CD4-positive, alpha-beta memory T cell (primary cell): ENCODE measurements at regions of chr15 and their contacts with region 1.

Region 1: DNA sequence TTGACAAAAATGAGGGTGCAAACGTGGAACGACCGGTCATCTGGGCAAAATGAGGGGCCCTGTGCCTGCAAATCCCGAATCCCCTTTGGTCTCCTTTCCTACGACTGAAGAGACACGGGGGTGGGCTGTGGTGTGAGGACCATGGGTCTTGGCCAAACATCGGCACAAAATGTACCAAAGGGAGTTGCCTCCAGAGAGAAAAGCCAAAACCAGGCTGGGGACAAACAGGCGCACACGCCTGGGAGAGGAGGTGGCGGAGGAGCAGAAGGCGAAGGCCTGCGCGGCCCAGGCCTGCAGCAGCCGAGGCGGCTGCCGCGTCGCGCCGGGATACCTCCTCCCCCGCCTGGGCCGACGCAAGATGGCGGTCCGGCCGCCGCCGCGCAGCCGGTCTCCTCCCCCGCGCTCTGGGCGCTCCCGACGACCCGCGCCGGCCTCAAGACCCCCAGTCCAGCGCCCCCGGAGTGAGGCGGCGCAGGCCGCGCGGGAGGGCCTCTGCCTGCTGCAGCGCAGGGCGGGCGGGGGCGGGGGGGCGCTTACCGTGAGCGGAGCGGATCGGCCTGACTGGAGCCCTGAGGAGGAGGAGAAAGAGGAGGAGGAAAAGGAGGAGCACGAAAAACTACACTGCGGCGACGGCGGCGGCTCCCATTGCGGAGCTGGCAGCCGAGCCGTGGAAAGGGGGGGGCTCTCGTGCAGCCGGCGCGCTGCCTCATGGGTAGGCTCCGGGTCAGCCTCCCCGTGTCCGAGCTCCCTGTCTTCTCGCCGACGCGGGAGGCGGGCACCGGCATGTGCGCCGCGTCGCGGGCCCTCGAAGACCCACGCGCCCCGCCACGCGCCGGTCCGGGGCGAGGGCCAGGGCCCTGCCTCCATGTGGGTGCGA is at the start of gene ZNF280D:
- DNase-seq: peak; percentile 78 to 85 (median 82)
- H3K4me3 ChIP-seq: peak within 1 kb of the TSS; percentile 54 to 69
- H3K4me3 Mint-ChIP-seq: peak within 1 kb of the TSS; percentile 92 to 98 (median 96)
- H3K27ac ChIP-seq: peak within 1 kb of the TSS; percentile 73
- H3K27ac Mint-ChIP-seq: peak within 1 kb of the TSS; percentile 93 to 98 (median 96)
- H3K4me1 ChIP-seq: peaks cover 40% of the 10 kb centered on the region
- H3K4me1 Mint-ChIP-seq: peaks cover 28 to 44% (median 38%) of the 10 kb centered on the region in 4 donors
- H3K27me3 ChIP-seq: no peaks in the 10 kb centered on the region
- H3K27me3 Mint-ChIP-seq: no peaks in the 10 kb centered on the region
- total RNA-seq, gene ZNF280D: 44.5 to 50.1 TPM

Region 2: GRCh38 chr15:56744701-56745683 is 11.8 kb after region 1 on chr15:
- CTCF ChIA-PET with region 1: interaction called, 3 read pairs
- POLR2A ChIA-PET with region 1: interaction called, 13 read pairs
- intact Hi-C with region 1: no loop called
- DNase-seq: no peak
- H3K4me3 ChIP-seq: no peak overlapping the region
- H3K4me3 Mint-ChIP-seq: no peak overlapping the region
- H3K27ac ChIP-seq: no peak overlapping the region
- H3K27ac Mint-ChIP-seq: no peak overlapping the region
- H3K4me1 ChIP-seq: no peaks in the 10 kb centered on the region
- H3K4me1 Mint-ChIP-seq: no peaks in the 10 kb centered on the region
- H3K27me3 ChIP-seq: no peaks in the 10 kb centered on the region
- H3K27me3 Mint-ChIP-seq: peaks cover 0 to 4% of the 10 kb centered on the region in 2 donors

Region 3: GRCh38 chr15:56886932-56887781 is 154.0 kb after region 1 on chr15:
- CTCF ChIA-PET with region 1: no interaction called
- POLR2A ChIA-PET with region 1: interaction called, 6 read pairs
- intact Hi-C with region 1: loop called (anchors 2 kb)
- DNase-seq: peak; percentile 81 to 85 (median 83)
- H3K4me3 ChIP-seq: peak overlapping the region; percentile 33 to 59
- H3K4me3 Mint-ChIP-seq: peak overlapping the region; percentile 88 to 93 (median 90)
- H3K27ac ChIP-seq: peak overlapping the region; percentile 83
- H3K27ac Mint-ChIP-seq: peak overlapping the region; percentile 92 to 98 (median 95)
- H3K4me1 ChIP-seq: peaks cover 19% of the 10 kb centered on the region
- H3K4me1 Mint-ChIP-seq: peaks cover 21 to 30% (median 27%) of the 10 kb centered on the region in 4 donors
- H3K27me3 ChIP-seq: no peaks in the 10 kb centered on the region
- H3K27me3 Mint-ChIP-seq: no peaks in the 10 kb centered on the region

Region 4: DNA sequence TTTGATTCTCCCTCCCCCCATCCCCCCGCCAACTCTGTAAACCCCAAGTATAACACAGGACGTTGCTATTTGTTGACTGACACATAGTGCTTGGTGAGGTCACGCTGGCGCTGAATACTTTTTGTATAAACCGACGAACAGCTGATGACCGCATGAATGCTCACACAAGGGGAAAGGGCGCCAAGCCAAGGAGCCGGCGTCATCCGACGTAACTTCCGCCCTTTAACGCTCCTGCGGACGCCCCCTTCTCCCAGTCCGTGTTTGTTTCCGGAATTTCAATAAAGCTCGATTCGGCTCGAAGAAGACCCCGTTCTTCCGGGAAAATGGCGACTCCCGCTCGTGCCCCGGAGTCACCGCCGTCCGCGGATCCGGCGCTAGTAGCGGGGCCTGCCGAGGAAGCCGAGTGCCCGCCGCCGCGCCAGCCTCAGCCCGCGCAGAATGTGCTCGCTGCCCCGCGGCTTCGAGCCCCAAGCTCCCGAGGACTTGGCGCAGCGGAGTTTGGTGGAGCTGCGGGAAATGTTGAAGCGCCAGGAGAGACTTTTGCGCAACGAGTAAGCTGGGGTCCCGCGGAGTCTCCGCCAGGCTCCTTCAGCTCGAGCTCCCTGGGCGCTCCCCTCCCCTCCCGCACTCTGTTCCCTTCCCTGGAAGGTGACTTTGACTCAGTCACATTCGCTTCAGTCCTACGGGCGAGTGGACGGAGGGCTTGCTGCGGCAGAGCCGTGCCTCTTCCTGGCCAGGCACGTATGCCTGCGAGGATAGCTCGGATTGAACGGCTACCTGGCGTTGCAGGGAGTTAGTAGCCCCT is 973.4 kb after region 1 on chr15 and contains the start of gene POLR2M:
- CTCF ChIA-PET with region 1: no interaction called
- POLR2A ChIA-PET with region 1: interaction called, 3 read pairs
- intact Hi-C with region 1: loop called (anchors 5 kb)
- DNase-seq: peak; percentile 90 to 97 (median 93)
- H3K4me3 ChIP-seq: peak within 1 kb of the TSS; percentile 77 to 94
- H3K4me3 Mint-ChIP-seq: peak within 1 kb of the TSS; percentile 87 to 93 (median 90)
- H3K27ac ChIP-seq: peak within 1 kb of the TSS; percentile 84
- H3K27ac Mint-ChIP-seq: peak within 1 kb of the TSS; percentile 84 to 98 (median 97)
- H3K4me1 ChIP-seq: peaks cover 65% of the 10 kb centered on the region
- H3K4me1 Mint-ChIP-seq: peaks cover 51 to 88% (median 75%) of the 10 kb centered on the region in 4 donors
- H3K27me3 ChIP-seq: no peaks in the 10 kb centered on the region
- H3K27me3 Mint-ChIP-seq: no peaks in the 10 kb centered on the region
- total RNA-seq, gene POLR2M: 86.5 to 97.3 TPM